Activated CD8-positive, alpha-beta T cell treated with anti-CD3 and anti-CD28 coated beads, Interleukin-2, amount 10 ng/mL, durations not matched to agents 7 days and 5 days (primary cell): ENCODE measurements at regions of chr22 and their contacts with region 1.

Region 1: DNA sequence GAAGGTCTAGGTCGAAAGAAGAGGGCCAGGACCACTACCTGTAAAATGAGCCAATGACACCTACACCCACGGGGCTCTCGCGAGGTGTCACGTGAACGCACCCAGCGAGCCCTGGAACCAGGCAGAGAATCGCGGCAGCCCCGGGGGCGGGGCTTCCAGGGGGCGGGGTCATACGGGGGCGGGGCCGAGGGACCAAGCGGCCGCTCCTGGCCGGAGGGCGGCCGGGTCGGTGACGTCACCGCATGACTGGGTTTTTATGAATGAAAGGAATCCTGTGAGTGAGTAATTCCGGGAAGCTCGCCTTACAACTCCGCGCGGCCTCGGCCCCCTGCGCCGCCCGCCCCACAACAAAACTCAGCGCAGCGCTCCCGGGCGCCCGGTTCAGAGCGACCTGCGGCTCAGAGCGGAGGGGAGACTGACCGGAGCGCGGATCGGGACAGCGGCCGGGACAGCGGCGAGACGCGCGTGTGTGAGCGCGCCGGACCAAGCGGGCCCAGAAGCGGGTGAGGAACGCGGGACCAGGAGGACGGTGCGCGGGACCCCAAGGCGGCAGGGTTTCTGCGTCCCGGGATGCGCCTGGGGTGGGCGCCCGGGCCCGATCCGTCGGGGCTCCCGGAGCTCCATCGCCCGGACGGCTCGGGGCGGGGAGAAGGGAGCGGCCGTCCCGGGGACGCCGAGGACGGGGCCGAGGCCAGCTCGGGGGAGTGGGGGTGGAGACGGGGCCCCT is at the start of gene MAFF:
- DNase-seq: peak; percentile 92
- ATAC-seq: peak; percentile 72
- H3K4me3 Mint-ChIP-seq: peak within 1 kb of the TSS; percentile 83
- H3K27ac Mint-ChIP-seq: peak within 1 kb of the TSS; percentile 96
- H3K4me1 Mint-ChIP-seq: peaks cover 54% of the 10 kb centered on the region
- H3K27me3 Mint-ChIP-seq: no peaks in the 10 kb centered on the region
- total RNA-seq, gene MAFF: 6.8 to 9.1 TPM

Region 2: GRCh38 chr22:38181453-38182247 is 20.2 kb before region 1 on chr22 and contains the start of gene PLA2G6:
- CTCF ChIA-PET with region 1: interaction called, 10 read pairs
- POLR2A ChIA-PET with region 1: interaction called, 43 read pairs
- DNase-seq: peak; percentile 99
- ATAC-seq: peak; percentile 98
- H3K4me3 Mint-ChIP-seq: peak within 1 kb of the TSS; percentile 96
- H3K27ac Mint-ChIP-seq: peak within 1 kb of the TSS; percentile 94
- H3K4me1 Mint-ChIP-seq: peaks cover 61% of the 10 kb centered on the region
- H3K27me3 Mint-ChIP-seq: peaks cover 6% of the 10 kb centered on the region
- total RNA-seq, gene PLA2G6: 39.8 to 43.1 TPM

Region 3: GRCh38 chr22:38223277-38223960 is 21.5 kb after region 1 on chr22:
- CTCF ChIA-PET with region 1: no interaction called
- POLR2A ChIA-PET with region 1: no interaction called
- DNase-seq: no peak
- ATAC-seq: no peak
- H3K4me3 Mint-ChIP-seq: no peak overlapping the region
- H3K27ac Mint-ChIP-seq: peak overlapping the region; percentile 39
- H3K4me1 Mint-ChIP-seq: peaks cover 11% of the 10 kb centered on the region
- H3K27me3 Mint-ChIP-seq: no peaks in the 10 kb centered on the region